CD4-positive, alpha-beta memory T cell (primary cell): ENCODE measurements at regions of chr17 and their contacts with region 1.

Region 1: DNA sequence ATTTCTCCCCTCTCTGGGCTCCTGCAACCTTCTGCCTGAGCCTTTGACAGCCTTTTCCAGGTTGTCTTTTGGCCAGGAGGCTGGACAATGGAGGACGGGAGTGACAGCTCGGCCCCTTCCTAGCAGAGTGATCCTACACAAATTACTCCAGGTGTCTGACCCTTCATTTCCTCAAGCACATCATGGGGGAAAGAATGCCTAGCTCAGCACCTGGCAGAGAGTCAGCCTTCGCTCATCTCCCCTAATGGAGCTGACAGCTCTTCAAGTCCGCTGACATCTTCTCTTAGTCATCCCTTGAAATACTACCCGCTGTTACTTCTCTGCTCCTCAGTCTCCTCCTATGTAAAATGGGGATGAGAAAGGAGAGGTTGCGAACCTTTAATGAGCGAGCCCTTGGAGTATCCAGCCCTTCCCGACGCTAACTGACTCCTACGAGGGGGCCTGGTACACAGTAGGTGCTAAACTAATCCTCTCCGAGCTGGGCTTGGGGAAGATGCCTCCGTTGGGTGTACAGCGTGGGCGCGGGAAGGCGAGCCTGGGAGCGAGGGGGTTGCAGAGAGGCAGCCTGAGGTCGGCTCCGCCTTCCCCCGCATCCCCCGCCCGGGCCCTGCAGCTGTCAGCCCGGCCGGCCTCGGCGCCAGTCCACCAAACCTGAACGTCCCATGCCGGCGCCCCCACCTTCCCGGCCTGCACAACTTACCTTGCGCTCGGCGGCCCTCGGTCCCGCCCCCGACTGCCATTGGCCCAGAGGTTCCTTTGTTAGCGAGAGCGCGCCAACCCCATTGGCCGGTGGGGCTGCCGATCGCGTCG is 481 bp upstream of the MPRIP start:
- DNase-seq: peak; percentile 94 to 97 (median 96)
- H3K4me3 ChIP-seq: peak overlapping the region; percentile 65 to 78
- H3K4me3 Mint-ChIP-seq: peak overlapping the region; percentile 53 to 81 (median 74)
- H3K27ac ChIP-seq: peak overlapping the region; percentile 50
- H3K27ac Mint-ChIP-seq: peak overlapping the region in 5 of 7 donors; percentile 30 to 87 (median 60)
- H3K4me1 ChIP-seq: peaks cover 42% of the 10 kb centered on the region
- H3K4me1 Mint-ChIP-seq: peaks cover 34 to 48% (median 42%) of the 10 kb centered on the region in 4 donors
- H3K27me3 ChIP-seq: no peaks in the 10 kb centered on the region
- H3K27me3 Mint-ChIP-seq: no peaks in the 10 kb centered on the region

Region 2: DNA sequence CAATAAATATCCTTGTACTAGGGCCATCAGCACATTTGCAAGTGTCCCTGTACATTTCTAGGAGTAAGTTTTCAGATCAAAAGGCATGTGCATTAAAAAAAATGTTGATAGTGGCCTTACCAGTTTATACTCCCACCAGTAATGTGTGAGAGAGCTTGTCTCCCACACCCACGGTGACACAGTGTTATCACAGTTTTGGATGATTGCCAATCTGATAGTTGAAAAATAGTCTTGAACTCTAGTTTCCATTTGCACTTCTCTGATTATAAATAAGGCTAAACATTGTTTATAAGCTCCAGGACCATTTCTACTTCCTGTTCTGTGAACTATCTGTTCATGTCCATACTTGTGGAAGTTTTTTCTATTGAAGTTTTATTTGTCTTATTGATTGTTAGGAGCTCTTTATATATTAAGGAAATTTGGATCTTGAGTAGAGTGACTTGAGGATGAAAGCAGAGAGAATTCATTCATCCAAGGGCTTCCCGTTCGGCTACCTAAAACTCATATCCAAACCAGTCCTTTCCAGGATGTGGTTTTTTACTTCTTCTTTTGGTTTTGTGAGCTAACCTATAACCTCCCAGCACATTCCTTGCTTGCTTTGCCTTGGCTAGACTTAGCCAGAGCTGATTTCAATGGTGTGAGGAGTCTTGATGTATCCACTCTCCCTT is 25.4 kb before region 1 on chr17:
- CTCF ChIA-PET with region 1: interaction called, 5 read pairs
- POLR2A ChIA-PET with region 1: interaction called, 12 read pairs
- intact Hi-C with region 1: loop called (anchors 1 kb)
- DNase-seq: peak; percentile 46 to 60 (median 58)
- H3K4me3 ChIP-seq: no peak overlapping the region
- H3K4me3 Mint-ChIP-seq: peak overlapping the region in 7 of 8 donors; percentile 2 to 73 (median 30)
- H3K27ac ChIP-seq: no peak overlapping the region
- H3K27ac Mint-ChIP-seq: peak overlapping the region; percentile 38 to 88 (median 83)
- H3K4me1 ChIP-seq: peaks cover 38% of the 10 kb centered on the region
- H3K4me1 Mint-ChIP-seq: peaks cover 28 to 50% (median 41%) of the 10 kb centered on the region in 4 donors
- H3K27me3 ChIP-seq: no peaks in the 10 kb centered on the region
- H3K27me3 Mint-ChIP-seq: no peaks in the 10 kb centered on the region

Region 3: DNA sequence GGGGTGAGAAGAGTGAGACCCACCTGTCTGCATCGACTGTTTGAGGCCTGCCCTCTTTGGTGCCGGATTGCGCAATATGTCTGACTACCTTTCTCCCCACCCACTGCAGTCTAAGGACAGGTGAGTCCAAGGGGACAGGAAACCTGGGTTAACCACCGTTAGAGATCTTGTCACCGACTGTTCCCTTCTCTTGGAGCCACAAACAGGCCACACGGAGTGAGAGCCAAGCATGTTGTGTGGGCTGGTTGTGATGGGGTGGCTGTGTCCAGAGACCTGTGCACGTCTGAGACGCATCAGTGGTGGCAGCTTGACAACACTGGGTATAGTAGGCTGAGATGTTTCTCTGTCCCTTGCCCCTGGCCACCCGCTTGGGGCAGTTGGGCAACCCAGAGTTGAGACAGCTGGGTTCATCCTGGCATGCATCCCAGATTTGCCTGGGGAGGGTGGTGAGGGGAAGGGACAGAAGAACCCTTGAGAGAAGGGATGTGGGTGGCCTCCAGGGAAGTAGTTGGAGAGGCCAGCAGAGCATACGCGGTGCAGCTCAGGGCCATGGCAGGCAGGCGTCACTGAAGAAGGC is 21.9 kb after region 1 on chr17:
- CTCF ChIA-PET with region 1: interaction called, 3 read pairs
- POLR2A ChIA-PET with region 1: interaction called, 3 read pairs
- intact Hi-C with region 1: loop called (anchors 2 kb)
- DNase-seq: peak in 2 of 5 donors; percentile 3 to 59
- H3K4me3 ChIP-seq: no peak overlapping the region
- H3K4me3 Mint-ChIP-seq: peak overlapping the region in 3 of 8 donors; percentile 26 to 67 (median 60)
- H3K27ac ChIP-seq: no peak overlapping the region
- H3K27ac Mint-ChIP-seq: peak overlapping the region; percentile 1 to 90 (median 78)
- H3K4me1 ChIP-seq: peaks cover 56% of the 10 kb centered on the region
- H3K4me1 Mint-ChIP-seq: peaks cover 47 to 71% (median 61%) of the 10 kb centered on the region in 4 donors
- H3K27me3 ChIP-seq: no peaks in the 10 kb centered on the region
- H3K27me3 Mint-ChIP-seq: no peaks in the 10 kb centered on the region

Region 4: GRCh38 chr17:17108451-17109049 is 66.8 kb after region 1 on chr17:
- CTCF ChIA-PET with region 1: no interaction called
- POLR2A ChIA-PET with region 1: interaction called, 11 read pairs
- intact Hi-C with region 1: no loop called
- DNase-seq: no peak
- H3K4me3 ChIP-seq: no peak overlapping the region
- H3K4me3 Mint-ChIP-seq: peak overlapping the region in 3 of 8 donors; percentile 27 to 73 (median 66)
- H3K27ac ChIP-seq: peak overlapping the region; percentile 46
- H3K27ac Mint-ChIP-seq: peak overlapping the region; percentile 89 to 95 (median 93)
- H3K4me1 ChIP-seq: peaks cover 69% of the 10 kb centered on the region
- H3K4me1 Mint-ChIP-seq: peaks cover 54 to 94% (median 67%) of the 10 kb centered on the region in 4 donors
- H3K27me3 ChIP-seq: no peaks in the 10 kb centered on the region
- H3K27me3 Mint-ChIP-seq: no peaks in the 10 kb centered on the region

Region 5: DNA sequence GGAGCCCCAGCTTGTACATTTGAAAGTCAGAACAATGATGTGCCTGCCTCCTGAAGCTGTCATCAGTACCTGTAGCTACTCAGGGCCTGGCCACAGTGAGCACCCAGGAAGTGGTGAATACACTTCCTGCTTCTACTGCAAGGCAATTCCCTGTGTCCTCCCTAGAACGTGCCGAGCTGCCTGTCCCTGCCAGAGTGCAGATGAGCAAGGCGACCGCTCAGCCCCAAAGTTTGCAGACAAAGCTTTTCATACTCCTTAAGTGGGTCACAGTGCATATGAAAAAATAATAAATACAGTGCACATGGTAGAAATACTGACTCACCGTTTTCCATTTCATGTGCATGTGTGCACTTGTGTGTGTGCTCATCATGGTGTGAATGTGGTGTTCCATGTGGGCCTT is 77.8 kb after region 1 on chr17:
- CTCF ChIA-PET with region 1: interaction called, 3 read pairs
- POLR2A ChIA-PET with region 1: interaction called, 3 read pairs
- intact Hi-C with region 1: loop called (anchors 5 kb)
- DNase-seq: peak; percentile 69 to 93 (median 81)
- H3K4me3 ChIP-seq: no peak overlapping the region
- H3K4me3 Mint-ChIP-seq: peak overlapping the region; percentile 10 to 79 (median 66)
- H3K27ac ChIP-seq: peak overlapping the region; percentile 66
- H3K27ac Mint-ChIP-seq: peak overlapping the region; percentile 93 to 96 (median 95)
- H3K4me1 ChIP-seq: peaks cover 93% of the 10 kb centered on the region
- H3K4me1 Mint-ChIP-seq: peaks cover 62 to 95% (median 84%) of the 10 kb centered on the region in 4 donors
- H3K27me3 ChIP-seq: no peaks in the 10 kb centered on the region
- H3K27me3 Mint-ChIP-seq: no peaks in the 10 kb centered on the region

Region 6: DNA sequence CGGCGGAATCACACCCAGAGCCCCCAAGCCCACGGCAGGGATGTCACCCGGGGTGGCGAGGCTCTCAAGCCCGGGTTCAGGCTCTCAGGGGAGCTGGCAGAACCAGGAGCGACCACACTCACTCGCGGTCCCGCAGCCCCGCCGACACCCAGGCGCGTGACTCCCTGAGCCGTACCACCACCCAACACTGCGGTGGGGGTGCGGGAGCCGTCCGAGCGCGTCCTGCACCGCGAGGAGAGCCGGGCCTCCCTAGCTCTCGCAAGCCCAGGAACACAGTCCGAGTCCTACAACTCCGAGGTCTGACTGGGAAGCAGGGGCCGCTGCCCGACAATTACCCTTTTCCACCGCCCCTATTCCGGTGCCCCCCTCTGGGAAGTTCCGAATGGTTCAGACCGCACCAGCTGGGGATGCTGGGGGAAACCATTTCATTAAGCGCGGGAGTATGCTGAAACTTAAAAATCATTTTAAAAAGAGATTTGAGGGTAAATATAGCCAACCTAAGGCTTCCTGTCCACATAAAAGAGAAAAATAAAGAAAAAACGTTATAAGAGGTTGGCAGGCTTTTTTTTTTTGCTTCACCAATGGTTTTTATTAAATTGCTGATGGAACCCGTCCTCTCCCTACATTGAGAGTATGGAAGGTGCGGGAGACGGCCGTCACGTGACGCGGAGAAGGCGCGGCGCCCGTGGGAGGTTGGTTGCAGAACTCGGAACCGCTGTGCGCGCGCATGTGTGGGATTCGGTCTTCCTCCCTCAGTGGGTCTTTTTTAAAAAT is 195.4 kb after region 1 on chr17 and contains the start of gene FLCN:
- CTCF ChIA-PET with region 1: no interaction called
- POLR2A ChIA-PET with region 1: interaction called, 8 read pairs
- intact Hi-C with region 1: loop called (anchors 2 kb)
- DNase-seq: peak; percentile 91 to 95 (median 92)
- H3K4me3 ChIP-seq: peak within 1 kb of the TSS; percentile 79 to 82
- H3K4me3 Mint-ChIP-seq: peak within 1 kb of the TSS; percentile 90 to 97 (median 95)
- H3K27ac ChIP-seq: peak within 1 kb of the TSS; percentile 94
- H3K27ac Mint-ChIP-seq: peak within 1 kb of the TSS; percentile 91 to 99 (median 99)
- H3K4me1 ChIP-seq: peaks cover 25% of the 10 kb centered on the region
- H3K4me1 Mint-ChIP-seq: peaks cover 15 to 35% (median 23%) of the 10 kb centered on the region in 4 donors
- H3K27me3 ChIP-seq: no peaks in the 10 kb centered on the region
- H3K27me3 Mint-ChIP-seq: no peaks in the 10 kb centered on the region
- total RNA-seq, gene FLCN: 94.4 to 95.0 TPM